AG04449 (cell line): ENCODE measurements at regions of chr16 and their contacts with region 1.

Region 1: DNA sequence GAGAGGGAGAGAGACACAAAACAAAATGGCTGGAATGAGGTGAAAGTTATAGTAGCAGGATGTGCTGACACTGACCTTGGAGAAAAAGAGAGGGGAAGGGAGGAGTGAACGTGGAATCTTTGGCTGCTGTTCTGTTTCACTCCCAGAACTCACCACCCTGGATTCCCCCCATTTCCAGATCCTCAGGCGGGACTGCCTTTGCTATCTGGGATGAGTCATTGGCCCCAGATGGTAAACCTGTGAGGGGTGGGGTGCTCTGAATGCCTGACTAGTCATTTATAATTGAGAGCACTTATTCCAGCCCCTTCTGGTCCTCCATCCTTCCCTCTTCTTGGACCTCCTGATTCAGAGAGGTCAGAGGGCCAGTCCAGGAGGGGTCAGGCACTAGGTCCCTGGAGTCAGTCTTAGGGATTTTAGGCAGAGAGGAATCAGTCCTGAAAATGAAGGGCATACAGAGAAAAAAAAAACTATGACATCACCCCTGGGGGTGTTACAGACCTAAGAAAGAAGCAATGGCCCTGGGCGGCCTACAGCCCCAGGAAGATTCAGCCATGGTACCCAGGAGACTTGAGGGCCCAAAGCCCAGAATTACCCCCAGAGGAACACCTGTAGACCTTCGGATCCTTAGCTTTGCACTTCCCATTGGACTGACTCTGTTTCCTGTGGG is 2.2 kb upstream of the ZG16 start:
- DNase-seq: no peak
- H3K4me3 ChIP-seq: no peak overlapping the region
- CTCF ChIP-seq: no peak

Region 2: GRCh38 chr16:29790183-29790952 is 14.5 kb after region 1 on chr16 and contains the start of gene KIF22:
- CTCF ChIA-PET with region 1: interaction called, 23 read pairs
- POLR2A ChIA-PET with region 1: no interaction called
- DNase-seq: peak; percentile 89
- H3K4me3 ChIP-seq: peak within 1 kb of the TSS; percentile 96
- CTCF ChIP-seq: peak; percentile 87